AG04449 (cell line): ENCODE measurements at regions of chr11 and their contacts with region 1.

Region 1: GRCh38 chr11:32792948-32793475 is 1.4 kb downstream of the CCDC73 start:
- DNase-seq: no peak
- H3K4me3 ChIP-seq: no peak overlapping the region
- CTCF ChIP-seq: peak; percentile 51

Region 2: GRCh38 chr11:32323814-32324130 is 469.2 kb before region 1 on chr11:
- CTCF ChIA-PET with region 1: interaction called, 59 read pairs
- POLR2A ChIA-PET with region 1: no interaction called
- DNase-seq: no peak
- H3K4me3 ChIP-seq: no peak overlapping the region
- CTCF ChIP-seq: no peak

Region 3: DNA sequence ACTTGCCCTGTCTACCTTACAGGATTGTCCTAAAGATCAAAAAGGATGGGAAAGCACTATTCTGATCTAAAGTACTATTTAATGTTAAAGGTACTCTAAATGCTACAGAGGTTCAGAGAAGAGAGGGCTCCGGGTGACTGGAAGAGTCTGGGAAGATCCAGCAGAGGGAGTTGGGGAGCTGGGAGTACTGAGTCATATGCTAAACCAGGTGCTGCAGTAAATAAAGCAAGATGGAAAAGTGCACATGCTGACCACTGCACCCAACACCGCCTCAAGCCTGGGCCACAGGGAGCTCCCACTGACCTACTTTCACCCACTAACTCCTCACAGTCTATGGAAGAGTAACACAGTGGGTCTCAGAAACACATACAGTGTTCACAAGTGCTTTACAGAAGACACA is 407.0 kb before region 1 on chr11:
- CTCF ChIA-PET with region 1: interaction called, 10 read pairs
- POLR2A ChIA-PET with region 1: no interaction called
- DNase-seq: no peak
- H3K4me3 ChIP-seq: no peak overlapping the region
- CTCF ChIP-seq: peak; percentile 8

Region 4: DNA sequence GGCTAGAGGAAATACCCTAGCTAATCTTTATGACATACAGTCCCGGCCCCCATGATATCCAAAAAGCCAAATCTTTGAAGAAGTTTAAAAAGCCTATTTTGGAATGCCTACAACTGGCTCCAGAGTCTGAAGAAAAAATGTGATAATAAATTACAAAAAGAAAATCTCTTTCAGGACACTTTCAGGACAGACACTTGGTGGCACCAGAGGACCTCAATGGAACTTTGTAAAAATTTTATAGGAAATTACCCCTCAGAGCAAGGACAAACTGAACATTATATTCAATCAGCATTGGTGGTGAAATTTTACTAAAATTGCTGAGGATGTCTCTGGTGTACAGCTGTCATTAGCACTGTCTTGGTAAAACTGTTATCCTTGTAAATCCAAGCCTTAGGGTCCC is 79.5 kb before region 1 on chr11:
- CTCF ChIA-PET with region 1: interaction called, 14 read pairs
- POLR2A ChIA-PET with region 1: no interaction called
- DNase-seq: no peak
- H3K4me3 ChIP-seq: no peak overlapping the region
- CTCF ChIP-seq: no peak